Activated CD8-positive, alpha-beta memory T cell treated with anti-CD3 and anti-CD28 coated beads, Interleukin-2, amount 10 ng/mL, durations not matched to agents 7 days and 5 days (primary cell): ENCODE measurements at regions of chr1 and their contacts with region 1.

Region 1: GRCh38 chr1:169694304-169695075 is 16.9 kb downstream of the SELL start:
- DNase-seq: peak; percentile 75
- ATAC-seq: peak; percentile 62
- H3K4me3 Mint-ChIP-seq: no peak overlapping the region
- H3K27ac Mint-ChIP-seq: peak overlapping the region; percentile 79
- H3K4me1 Mint-ChIP-seq: peaks cover 94% of the 10 kb centered on the region
- H3K27me3 Mint-ChIP-seq: no peaks in the 10 kb centered on the region

Region 2: DNA sequence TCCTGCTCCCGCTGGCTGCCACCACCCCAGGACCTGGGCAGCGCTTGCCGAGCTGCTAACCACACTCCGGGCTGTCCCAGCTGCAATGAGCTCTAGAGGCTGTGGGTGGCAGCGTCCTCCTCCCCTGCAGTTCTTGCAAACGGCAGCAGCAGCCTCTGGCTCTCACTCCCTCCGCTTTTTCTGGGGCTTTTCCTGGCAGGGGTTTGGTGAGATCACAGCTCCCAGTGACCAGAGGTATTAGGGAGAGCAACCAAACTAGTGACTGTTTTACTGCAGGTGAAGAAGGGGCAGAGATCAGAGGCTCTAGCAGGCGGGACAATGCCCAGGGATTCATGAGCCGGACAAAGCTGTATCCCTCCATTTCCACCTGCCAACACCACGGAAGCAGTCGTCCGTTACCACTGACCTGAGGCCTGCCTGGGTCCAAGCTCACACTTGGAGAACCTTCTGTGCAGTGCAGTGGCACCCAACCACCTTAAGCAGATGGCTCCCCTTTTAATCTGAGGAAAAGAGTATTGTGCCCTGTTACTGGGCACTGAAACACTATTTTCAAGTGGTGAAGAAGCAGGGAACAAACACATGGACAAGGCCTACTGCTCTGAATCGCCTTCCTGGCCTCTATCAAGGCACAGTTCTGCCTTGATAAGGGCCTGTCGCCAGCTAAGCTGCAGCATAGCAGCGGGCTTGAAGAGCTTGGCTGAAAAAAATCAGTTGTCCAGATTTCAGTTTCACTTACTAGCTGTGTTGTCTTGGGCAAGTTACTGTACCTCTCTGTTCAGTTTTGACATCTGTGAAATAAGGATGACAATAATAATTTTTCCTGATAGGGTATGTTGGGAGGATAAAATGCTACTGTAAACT is 107.9 kb before region 1 on chr1 and contains the start of gene F5:
- CTCF ChIA-PET with region 1: interaction called, 19 read pairs
- DNase-seq: peak; percentile 88
- ATAC-seq: peak; percentile 98
- H3K4me3 Mint-ChIP-seq: peak within 1 kb of the TSS; percentile 81
- H3K27ac Mint-ChIP-seq: peak within 1 kb of the TSS; percentile 83
- H3K4me1 Mint-ChIP-seq: peaks cover 48% of the 10 kb centered on the region
- H3K27me3 Mint-ChIP-seq: peaks cover 3% of the 10 kb centered on the region
- total RNA-seq, gene F5: 3.1 to 14.0 TPM